Activated naive CD4-positive, alpha-beta T cell treated with anti-CD3 and anti-CD28 coated beads, Interleukin-2, amount 10 ng/mL, durations not matched to agents 7 days and 5 days (primary cell): ENCODE measurements at regions of chr3 and their contacts with region 1.

Region 1: GRCh38 chr3:45962033-45962432 is 18.8 kb downstream of the CXCR6 start:
- DNase-seq: no peak
- H3K4me3 Mint-ChIP-seq: no peak overlapping the region
- H3K27ac Mint-ChIP-seq: no peak overlapping the region
- H3K4me1 Mint-ChIP-seq: peaks cover 54% of the 10 kb centered on the region
- H3K27me3 Mint-ChIP-seq: no peaks in the 10 kb centered on the region

Region 2: GRCh38 chr3:45950686-45951600 is 11.1 kb before region 1 on chr3:
- CTCF ChIA-PET with region 1: interaction called, 11 read pairs
- DNase-seq: peak; percentile 72
- H3K4me3 Mint-ChIP-seq: no peak overlapping the region
- H3K27ac Mint-ChIP-seq: peak overlapping the region; percentile 86
- H3K4me1 Mint-ChIP-seq: peaks cover 47% of the 10 kb centered on the region
- H3K27me3 Mint-ChIP-seq: no peaks in the 10 kb centered on the region

Region 3: DNA sequence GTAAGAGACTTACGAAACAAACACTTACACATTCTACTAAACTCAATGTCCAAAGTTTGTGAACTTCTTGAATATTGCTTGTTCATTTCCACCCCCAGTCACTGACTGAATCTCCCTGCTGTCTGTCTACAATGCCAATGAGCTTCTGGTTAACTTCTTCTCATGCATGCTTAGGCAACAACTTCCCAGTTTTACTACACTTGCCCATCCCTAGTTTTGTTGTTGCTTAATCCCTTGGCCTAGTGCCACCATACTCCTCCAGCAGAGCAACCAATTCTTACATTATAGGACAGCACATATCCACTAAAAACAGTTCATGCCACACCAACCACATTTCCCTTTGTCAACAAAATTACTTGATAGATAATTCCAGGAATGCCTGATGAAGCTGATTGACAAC is 351.0 kb after region 1 on chr3:
- CTCF ChIA-PET with region 1: no interaction called
- DNase-seq: no peak
- H3K4me3 Mint-ChIP-seq: no peak overlapping the region
- H3K27ac Mint-ChIP-seq: no peak overlapping the region
- H3K4me1 Mint-ChIP-seq: peaks cover 13% of the 10 kb centered on the region
- H3K27me3 Mint-ChIP-seq: peaks cover 4% of the 10 kb centered on the region